ENCODE measurements at regions of chr3 and their contacts with region 1.

Region 1: GRCh38 chr3:128814519-128815317 is 64.7 kb upstream of the ACAD9 start:
- DNase-seq: peak in 1 of 10 donors; percentile 32
- H3K4me3 ChIP-seq: no peak overlapping the region
- H3K27ac ChIP-seq: peak overlapping the region in 53 of 59 donors; percentile 4 to 88 (median 74)
- H3K27me3 ChIP-seq: no peaks in the 10 kb centered on the region
- CTCF ChIP-seq: peak in 1 of 56 donors; percentile 7

Region 2: GRCh38 chr3:128503164-128503651 is 311.5 kb before region 1 on chr3:
- intact Hi-C with region 1: no loop called
- DNase-seq: peak in 1 of 10 donors; percentile 17
- H3K4me3 ChIP-seq: no peak overlapping the region
- H3K27ac ChIP-seq: no peak overlapping the region
- H3K27me3 ChIP-seq: peaks cover 0 to 66% (median 24%) of the 10 kb centered on the region in 45 donors
- CTCF ChIP-seq: no peak

Region 3: GRCh38 chr3:128603811-128604775 is 210.6 kb before region 1 on chr3:
- intact Hi-C with region 1: no loop called
- DNase-seq: no peak
- H3K4me3 ChIP-seq: no peak overlapping the region
- H3K27ac ChIP-seq: no peak overlapping the region
- H3K27me3 ChIP-seq: no peaks in the 10 kb centered on the region
- CTCF ChIP-seq: no peak

Region 4: DNA sequence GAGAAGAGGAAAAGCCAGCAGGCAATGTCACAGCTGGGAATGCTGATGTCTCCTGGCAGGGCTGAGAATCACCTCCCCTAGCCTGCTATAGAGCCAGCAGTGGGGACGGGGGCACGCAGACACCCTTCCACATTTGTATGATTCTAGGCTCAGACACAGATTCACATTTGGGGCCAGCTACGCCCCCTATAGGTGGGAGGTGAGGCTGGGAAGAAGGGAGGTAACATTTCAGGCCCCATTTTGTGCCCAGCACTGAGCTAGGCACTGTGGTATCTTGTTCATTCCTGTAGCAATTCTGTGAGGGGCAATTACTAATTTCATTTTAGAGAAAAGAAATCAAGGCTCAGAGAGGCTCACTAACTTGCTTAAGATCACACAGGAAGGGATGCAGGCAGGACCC is 48.8 kb after region 1 on chr3:
- intact Hi-C with region 1: loop called in 1 of 2 experiments (anchors 10 kb)
- DNase-seq: no peak
- H3K4me3 ChIP-seq: no peak overlapping the region
- H3K27ac ChIP-seq: peak overlapping the region in 14 of 59 donors; percentile 4 to 83 (median 67)
- H3K27me3 ChIP-seq: no peaks in the 10 kb centered on the region
- CTCF ChIP-seq: peak in 32 of 56 donors; percentile 8 to 44 (median 23)